Head of caudate nucleus (tissue), 42 donors: ENCODE measurements at regions of chr10 and their contacts with region 1.

Region 1: GRCh38 chr10:77029777-77030717 is 607.6 kb downstream of the KCNMA1 start:
- DNase-seq: no peak

Region 2: DNA sequence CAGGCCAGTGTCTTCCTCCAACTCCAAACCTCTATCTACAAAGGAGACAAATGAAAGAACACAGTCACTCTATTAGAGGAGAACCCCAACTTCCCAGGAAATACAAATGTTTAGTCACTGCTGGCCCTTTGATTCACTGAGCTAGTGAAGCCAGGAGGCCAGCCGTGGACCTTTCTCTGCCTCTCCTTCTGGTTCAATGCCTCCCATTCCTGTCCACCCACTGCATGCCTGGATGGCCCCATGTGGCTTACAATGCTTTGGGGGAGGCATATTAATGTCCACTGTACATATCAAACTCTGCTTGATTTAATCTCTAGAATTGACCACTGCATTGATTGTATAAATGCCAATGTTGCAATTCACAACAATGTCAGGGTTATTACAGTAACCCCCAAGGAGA is 79.7 kb before region 1 on chr10:
- intact Hi-C with region 1: no loop called
- DNase-seq: no peak

Region 3: GRCh38 chr10:77015360-77015759 is 14.7 kb before region 1 on chr10:
- intact Hi-C with region 1: loop called (anchors 2 kb)
- DNase-seq: no peak

Region 4: GRCh38 chr10:77068969-77069368 is 38.9 kb after region 1 on chr10:
- intact Hi-C with region 1: no loop called
- DNase-seq: peak in 27 of 42 donors; percentile 11 to 73 (median 39)